Dendritic cell treated with granulocyte-macrophage colony-stimulating factor and Interleukin-4, amounts not matched to agents 40 ng/mL and 50 ng/mL, for 4 days (primary cell): ENCODE measurements at regions of chr10 and their contacts with region 1.

Region 1: DNA sequence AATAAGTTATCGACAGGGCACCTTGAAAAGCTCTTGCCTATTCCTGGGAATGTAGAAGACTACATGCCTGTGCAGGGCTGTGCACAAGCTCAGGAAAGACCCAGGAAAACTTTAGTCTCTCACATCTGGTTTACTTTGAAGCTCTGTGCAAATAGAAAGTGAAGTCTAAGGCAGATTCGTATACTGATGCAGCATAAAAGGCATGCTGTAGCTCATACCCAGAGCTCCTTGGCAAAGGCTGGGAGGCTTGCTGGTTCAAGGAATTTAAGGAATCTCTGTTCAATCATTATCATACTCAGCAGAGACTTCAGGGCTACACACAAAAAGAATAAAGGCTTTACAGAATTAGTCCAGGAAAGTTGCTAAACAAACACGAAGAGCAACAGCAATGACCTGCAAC is 192.0 kb downstream of the OTUD1 start:
- H3K4me3 Mint-ChIP-seq: no peak overlapping the region
- H3K27ac Mint-ChIP-seq: no peak overlapping the region
- H3K4me1 Mint-ChIP-seq: no peaks in the 10 kb centered on the region
- H3K27me3 Mint-ChIP-seq: peaks cover 8% of the 10 kb centered on the region

Region 2: DNA sequence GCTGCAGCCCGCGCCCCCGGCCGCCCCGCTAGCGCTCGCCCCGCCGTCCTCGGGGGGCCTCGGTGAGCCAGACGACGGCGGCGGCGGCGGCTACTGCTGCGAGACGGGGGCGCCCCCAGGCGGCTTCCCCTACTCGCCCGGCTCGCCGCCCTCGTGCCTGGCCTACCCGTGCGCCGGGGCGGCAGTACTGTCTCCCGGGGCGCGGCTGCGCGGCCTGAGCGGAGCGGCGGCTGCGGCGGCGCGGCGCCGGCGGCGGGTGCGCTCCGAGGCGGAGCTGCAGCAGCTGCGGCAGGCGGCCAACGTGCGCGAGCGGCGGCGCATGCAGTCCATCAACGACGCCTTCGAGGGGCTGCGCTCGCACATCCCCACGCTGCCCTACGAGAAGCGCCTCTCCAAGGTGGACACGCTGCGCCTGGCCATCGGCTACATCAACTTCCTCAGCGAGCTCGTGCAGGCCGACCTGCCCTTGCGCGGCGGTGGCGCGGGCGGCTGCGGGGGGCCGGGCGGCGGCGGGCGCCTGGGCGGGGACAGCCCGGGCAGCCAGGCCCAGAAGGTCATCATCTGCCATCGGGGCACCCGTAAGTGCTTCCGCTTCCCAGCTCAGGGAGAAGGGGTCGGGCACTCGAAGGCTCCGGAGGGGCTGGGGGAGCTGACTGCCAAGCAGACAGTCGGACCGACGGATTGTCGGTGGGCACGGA is 438.0 kb before region 1 on chr10:
- intact Hi-C with region 1: no loop called
- H3K4me3 Mint-ChIP-seq: no peak overlapping the region
- H3K27ac Mint-ChIP-seq: no peak overlapping the region
- H3K4me1 Mint-ChIP-seq: no peaks in the 10 kb centered on the region
- H3K27me3 Mint-ChIP-seq: peaks cover 87% of the 10 kb centered on the region

Region 3: GRCh38 chr10:23530079-23530478 is 100.8 kb before region 1 on chr10:
- intact Hi-C with region 1: no loop called
- H3K4me3 Mint-ChIP-seq: no peak overlapping the region
- H3K27ac Mint-ChIP-seq: no peak overlapping the region
- H3K4me1 Mint-ChIP-seq: peaks cover 25% of the 10 kb centered on the region
- H3K27me3 Mint-ChIP-seq: no peaks in the 10 kb centered on the region

Region 4: GRCh38 chr10:23571884-23572283 is 59.0 kb before region 1 on chr10:
- intact Hi-C with region 1: loop called (anchors 10 kb)
- H3K4me3 Mint-ChIP-seq: no peak overlapping the region
- H3K27ac Mint-ChIP-seq: no peak overlapping the region
- H3K4me1 Mint-ChIP-seq: no peaks in the 10 kb centered on the region
- H3K27me3 Mint-ChIP-seq: peaks cover 2% of the 10 kb centered on the region